Activated naive CD4-positive, alpha-beta T cell treated with anti-CD3 and anti-CD28 coated beads for 36 hours (primary cell): ENCODE measurements at regions of chr17 and their contacts with region 1.

Region 1: GRCh38 chr17:82022981-82023374 is at the start of gene LRRC45:
- DNase-seq: peak; percentile 100
- H3K4me3 Mint-ChIP-seq: peak within 1 kb of the TSS; percentile 86
- H3K27ac Mint-ChIP-seq: no peak within 1 kb of the TSS
- H3K4me1 Mint-ChIP-seq: peaks cover 22% of the 10 kb centered on the region
- H3K27me3 Mint-ChIP-seq: no peaks in the 10 kb centered on the region
- total RNA-seq, gene LRRC45: 12.0 to 12.5 TPM

Region 2: DNA sequence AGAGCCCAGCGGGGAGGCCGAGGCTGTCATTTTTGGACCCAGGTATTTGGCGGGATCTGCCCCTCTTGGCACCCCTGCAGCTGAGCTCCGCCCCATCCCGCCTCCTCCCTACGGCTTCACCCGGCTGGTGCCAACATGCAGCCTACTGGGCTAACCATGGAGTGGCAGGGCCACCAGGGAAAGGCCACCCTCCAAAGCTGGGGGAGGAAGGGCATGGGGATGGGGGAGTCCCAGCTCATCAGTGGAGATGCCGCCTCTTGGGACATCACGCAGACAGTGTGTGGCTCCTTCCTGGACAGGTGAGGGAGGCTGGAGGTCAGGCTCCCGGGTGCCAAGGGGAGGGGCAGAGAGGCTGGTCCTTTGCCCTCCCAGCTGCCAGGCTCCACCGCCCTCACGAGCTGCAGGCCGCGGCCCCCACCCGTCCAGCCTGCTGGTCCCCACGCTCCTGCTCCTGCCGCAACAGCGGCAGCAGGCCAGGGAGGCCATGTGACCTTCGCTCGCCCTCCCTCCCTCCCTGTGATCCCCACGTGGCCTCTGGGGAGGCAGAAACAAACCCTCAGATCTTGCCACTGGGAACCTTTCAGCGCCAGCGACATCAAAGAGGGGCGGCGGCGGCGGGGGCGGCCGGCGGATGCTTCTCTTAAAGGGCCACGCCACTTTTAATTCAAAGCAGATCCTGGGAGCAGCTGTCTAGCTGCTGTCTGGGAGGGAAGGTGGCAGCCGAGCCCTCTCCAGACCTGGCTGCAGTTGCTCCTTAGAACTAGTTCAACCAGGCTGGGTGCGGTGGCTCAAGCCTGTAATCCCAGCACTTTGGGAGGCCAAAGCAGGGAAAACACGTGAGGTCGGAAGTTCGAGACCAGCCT is 55.2 kb before region 1 on chr17:
- CTCF ChIA-PET with region 1: interaction called, 95 read pairs
- intact Hi-C with region 1: loop called (anchors 2 kb)
- DNase-seq: peak; percentile 96
- H3K4me3 Mint-ChIP-seq: peak overlapping the region; percentile 68
- H3K27ac Mint-ChIP-seq: peak overlapping the region; percentile 79
- H3K4me1 Mint-ChIP-seq: peaks cover 14% of the 10 kb centered on the region
- H3K27me3 Mint-ChIP-seq: no peaks in the 10 kb centered on the region

Region 3: GRCh38 chr17:81977211-81978027 is 45.6 kb before region 1 on chr17 and contains the start of gene ASPSCR1:
- CTCF ChIA-PET with region 1: interaction called, 5 read pairs
- intact Hi-C with region 1: loop called (anchors 1 kb)
- DNase-seq: peak; percentile 89
- H3K4me3 Mint-ChIP-seq: peak within 1 kb of the TSS; percentile 98
- H3K27ac Mint-ChIP-seq: peak within 1 kb of the TSS; percentile 97
- H3K4me1 Mint-ChIP-seq: peaks cover 37% of the 10 kb centered on the region
- H3K27me3 Mint-ChIP-seq: no peaks in the 10 kb centered on the region
- total RNA-seq, gene ASPSCR1: 33.6 to 34.8 TPM

Region 4: DNA sequence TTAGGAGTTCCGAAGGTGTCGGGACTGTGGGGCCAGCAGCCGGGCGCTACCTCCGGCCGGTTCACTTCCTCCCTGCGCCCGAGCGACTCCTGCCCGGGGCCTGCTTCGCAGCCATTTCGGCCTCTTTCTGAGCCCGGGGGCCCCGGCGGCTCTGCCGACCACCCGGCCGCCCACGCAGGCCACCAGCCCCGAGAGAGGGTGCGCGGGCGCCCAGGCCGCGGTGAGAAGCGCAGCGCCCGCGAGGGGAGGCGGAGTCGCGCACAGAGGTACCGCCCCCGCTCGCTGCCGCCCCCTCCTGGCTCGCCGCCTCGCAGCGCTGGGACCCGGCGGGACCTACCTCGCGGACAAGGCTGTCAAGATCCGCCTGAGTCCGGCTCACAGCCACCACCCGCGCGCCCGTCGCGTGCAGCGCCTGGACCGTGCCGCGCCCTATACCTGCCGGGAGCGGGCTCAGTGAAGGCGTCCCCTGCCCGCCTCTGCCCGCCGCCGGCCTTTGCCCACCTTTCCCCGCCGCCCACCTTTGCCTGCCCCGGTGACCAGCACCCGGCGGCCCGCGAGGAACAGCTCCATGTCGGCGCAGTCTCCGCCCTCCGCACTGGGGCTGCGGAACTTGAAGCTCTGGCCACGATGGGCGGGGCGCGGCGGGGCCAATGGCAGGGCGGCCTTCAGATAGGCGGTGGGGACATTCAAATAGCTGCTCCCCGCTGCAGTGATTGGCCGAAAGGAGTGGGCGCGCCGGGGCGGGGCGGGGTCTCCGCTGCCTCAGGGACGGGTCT is 14.3 kb after region 1 on chr17 and contains the start of gene DCXR:
- CTCF ChIA-PET with region 1: interaction called, 6 read pairs
- intact Hi-C with region 1: loop called (anchors 1 kb)
- DNase-seq: peak; percentile 96
- H3K4me3 Mint-ChIP-seq: peak within 1 kb of the TSS; percentile 85
- H3K27ac Mint-ChIP-seq: peak within 1 kb of the TSS; percentile 82
- H3K4me1 Mint-ChIP-seq: peaks cover 22% of the 10 kb centered on the region
- H3K27me3 Mint-ChIP-seq: no peaks in the 10 kb centered on the region
- total RNA-seq, gene DCXR: 139 to 146 TPM

Region 5: DNA sequence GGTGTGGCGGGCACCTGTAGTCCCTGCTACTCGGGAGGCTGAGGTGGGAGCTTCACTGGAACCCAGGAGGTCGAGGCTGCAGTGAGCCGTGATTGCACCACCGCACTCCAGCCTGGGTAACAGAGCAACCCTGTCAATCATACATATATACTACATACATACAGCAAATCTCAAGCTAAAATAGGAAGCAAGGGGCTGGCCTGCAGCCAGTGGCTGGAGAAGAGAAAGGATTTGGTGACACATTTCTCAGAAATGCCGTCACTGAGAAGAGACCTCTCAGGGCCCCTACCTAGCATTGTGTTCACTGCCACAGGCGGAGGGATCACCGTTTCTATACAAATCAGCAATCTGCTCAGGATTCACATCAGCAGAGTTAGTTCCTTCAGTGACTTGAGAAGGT is 452.5 kb after region 1 on chr17:
- CTCF ChIA-PET with region 1: no interaction called
- intact Hi-C with region 1: no loop called
- DNase-seq: no peak
- H3K4me3 Mint-ChIP-seq: no peak overlapping the region
- H3K27ac Mint-ChIP-seq: no peak overlapping the region
- H3K4me1 Mint-ChIP-seq: no peaks in the 10 kb centered on the region
- H3K27me3 Mint-ChIP-seq: no peaks in the 10 kb centered on the region